ENCODE measurements at regions of chr1 and their contacts with region 1.

Region 1: DNA sequence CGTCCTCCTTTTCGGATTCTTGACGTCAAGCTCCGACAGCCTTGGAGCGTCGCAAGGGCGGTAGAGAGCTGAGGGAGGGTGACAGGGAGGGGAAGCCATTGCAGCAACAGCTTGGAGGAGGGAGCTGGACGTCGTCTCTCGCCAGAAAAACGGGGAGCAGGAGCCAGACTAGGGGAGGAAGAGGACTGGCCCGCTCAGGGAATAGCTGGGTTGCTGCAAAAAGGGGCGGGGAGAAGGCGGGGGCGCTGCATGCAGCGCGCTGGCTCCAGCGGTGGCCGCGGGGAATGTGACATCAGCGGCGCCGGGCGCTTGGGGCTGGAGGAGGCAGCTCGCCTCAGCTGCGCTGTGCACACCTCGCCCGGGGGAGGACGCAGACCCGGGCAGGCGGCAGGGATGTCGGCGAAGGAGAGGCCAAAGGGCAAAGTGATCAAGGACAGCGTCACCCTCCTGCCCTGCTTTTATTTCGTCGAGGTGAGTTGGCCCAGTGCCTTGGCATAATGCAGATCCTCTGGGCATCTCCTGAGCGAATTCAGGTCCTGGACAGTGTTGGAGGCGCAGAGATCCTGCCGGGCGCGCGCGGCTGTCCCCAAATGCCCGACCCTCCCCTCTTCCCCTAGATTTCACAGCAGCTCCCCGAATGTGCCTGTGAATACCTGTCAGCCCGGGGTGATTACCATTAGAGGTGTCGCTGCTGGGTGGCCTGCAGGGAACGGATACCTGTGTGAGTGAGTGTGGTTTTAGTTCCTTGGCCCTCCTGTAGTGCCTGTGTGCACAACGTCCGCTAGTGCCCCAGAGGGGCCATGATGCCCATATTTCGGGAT is at the start of gene PLPPR4:
- DNase-seq: peak; percentile 12
- ATAC-seq: peak; percentile 98
- H3K4me3 ChIP-seq: peak within 1 kb of the TSS; percentile 33 to 53
- H3K27ac ChIP-seq: no peak within 1 kb of the TSS
- H3K4me1 ChIP-seq: peaks cover 0 to 11% of the 10 kb centered on the region in 2 experiments; a peak in 2 of 4 replicates
- H3K27me3 ChIP-seq: no peaks in the 10 kb centered on the region
- CTCF ChIP-seq: no peak
- POLR2A ChIP-seq: no peak
- RAD21 ChIP-seq: no peak
- total RNA-seq, gene PLPPR4: 0.42 TPM

Region 2: DNA sequence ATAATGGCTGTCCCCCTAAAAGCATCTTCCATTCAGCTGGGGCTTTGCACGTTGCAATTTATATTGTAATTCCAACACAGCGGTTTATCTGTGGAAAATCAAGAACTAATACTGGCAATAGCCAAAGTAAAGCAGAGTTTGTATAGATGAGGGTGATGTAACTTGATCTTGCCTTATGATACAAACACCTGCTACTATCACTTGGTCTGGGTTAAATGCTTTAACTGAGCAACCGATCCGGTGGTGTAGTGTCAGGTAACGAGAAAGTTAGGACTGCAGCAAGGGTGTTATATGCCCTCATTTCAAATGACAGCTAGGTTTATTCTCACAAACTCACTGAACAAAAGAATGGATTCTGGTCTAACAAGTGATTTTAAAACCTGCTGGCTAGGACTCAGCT is 47.5 kb before region 1 on chr1:
- CTCF ChIA-PET with region 1: no interaction called
- POLR2A ChIA-PET with region 1: no interaction called
- RAD21 ChIA-PET with region 1: no interaction called
- intact Hi-C with region 1: loop called (anchors 1 kb)
- DNase-seq: no peak
- ATAC-seq: no peak
- H3K4me3 ChIP-seq: no peak overlapping the region
- H3K27ac ChIP-seq: no peak overlapping the region
- H3K4me1 ChIP-seq: no peaks in the 10 kb centered on the region
- H3K27me3 ChIP-seq: no peaks in the 10 kb centered on the region
- CTCF ChIP-seq: no peak
- POLR2A ChIP-seq: no peak
- RAD21 ChIP-seq: no peak

Region 3: DNA sequence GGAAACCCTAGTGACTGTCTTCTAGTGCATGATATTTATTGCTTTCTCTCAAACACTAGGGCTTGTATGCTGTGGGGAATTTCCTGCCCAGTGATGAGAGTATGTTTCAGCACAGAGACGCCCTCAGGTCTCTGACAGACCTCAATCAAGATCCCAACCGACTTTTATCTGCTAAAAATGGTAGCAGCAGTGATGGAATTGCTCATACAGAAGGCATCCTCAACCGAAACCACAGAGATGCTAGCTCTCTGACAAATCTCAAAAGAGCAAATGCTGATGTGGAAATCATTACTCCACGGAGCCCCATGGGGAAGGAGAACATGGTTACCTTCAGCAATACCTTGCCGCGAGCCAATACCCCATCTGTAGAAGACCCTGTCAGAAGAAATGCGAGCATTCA is 41.2 kb after region 1 on chr1:
- CTCF ChIA-PET with region 1: no interaction called
- POLR2A ChIA-PET with region 1: no interaction called
- RAD21 ChIA-PET with region 1: no interaction called
- intact Hi-C with region 1: no loop called
- DNase-seq: no peak
- ATAC-seq: no peak
- H3K4me3 ChIP-seq: no peak overlapping the region
- H3K27ac ChIP-seq: no peak overlapping the region
- H3K4me1 ChIP-seq: no peaks in the 10 kb centered on the region
- H3K27me3 ChIP-seq: no peaks in the 10 kb centered on the region
- CTCF ChIP-seq: no peak
- POLR2A ChIP-seq: no peak
- RAD21 ChIP-seq: no peak

Region 4: GRCh38 chr1:99992760-99993467 is 728.5 kb after region 1 on chr1:
- CTCF ChIA-PET with region 1: no interaction called
- POLR2A ChIA-PET with region 1: no interaction called
- RAD21 ChIA-PET with region 1: no interaction called
- intact Hi-C with region 1: no loop called
- DNase-seq: no peak
- ATAC-seq: peak; percentile 61
- H3K4me3 ChIP-seq: no peak overlapping the region
- H3K27ac ChIP-seq: no peak overlapping the region
- H3K4me1 ChIP-seq: peaks cover 0 to 7% of the 10 kb centered on the region in 2 experiments; a peak in 2 of 4 replicates
- H3K27me3 ChIP-seq: no peaks in the 10 kb centered on the region
- CTCF ChIP-seq: no peak
- POLR2A ChIP-seq: no peak
- RAD21 ChIP-seq: no peak

Region 5: DNA sequence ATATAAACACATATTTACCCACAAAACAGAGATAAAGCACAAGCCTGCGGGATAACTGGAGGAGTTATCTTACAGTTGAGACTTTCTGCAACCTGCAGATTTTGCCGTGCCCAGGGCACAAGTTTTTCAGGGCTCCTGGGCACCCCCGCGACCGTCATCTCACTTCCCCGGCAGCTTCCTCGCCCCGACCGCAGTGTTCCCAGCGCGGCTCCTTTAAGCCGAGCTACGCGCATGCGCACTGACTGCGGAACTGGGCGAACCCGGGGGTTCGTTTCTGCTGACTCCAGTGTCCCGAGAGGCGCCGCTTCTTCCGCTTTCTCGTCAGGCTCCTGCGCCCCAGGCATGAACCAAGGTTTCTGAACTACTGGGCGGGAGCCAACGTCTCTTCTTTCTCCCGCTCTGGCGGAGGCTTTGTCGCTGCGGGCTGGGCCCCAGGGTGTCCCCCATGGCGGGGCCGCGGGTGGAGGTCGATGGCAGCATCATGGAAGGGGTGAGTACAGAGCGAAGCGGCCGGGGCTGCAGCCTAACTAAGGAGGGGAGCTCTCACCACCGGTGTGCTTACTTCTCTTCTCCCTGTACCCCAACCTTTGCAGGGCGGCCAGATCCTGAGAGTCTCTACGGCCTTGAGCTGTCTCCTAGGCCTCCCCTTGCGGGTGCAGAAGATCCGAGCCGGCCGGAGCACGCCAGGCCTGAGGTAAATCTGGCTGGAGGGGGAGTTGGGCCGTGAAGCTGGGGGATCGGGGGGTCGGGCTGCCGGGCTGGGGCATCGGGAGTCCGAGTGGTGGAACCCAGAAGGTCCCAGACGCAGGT is 1001.7 kb after region 1 on chr1 and contains the start of gene RTCA:
- CTCF ChIA-PET with region 1: no interaction called
- POLR2A ChIA-PET with region 1: no interaction called
- RAD21 ChIA-PET with region 1: no interaction called
- intact Hi-C with region 1: no loop called
- DNase-seq: peak; percentile 87
- ATAC-seq: peak; percentile 96
- H3K4me3 ChIP-seq: peak within 1 kb of the TSS; percentile 94 to 99
- H3K27ac ChIP-seq: peak within 1 kb of the TSS; percentile 87
- H3K4me1 ChIP-seq: peaks cover 0 to 15% of the 10 kb centered on the region in 2 experiments; a peak in 2 of 4 replicates
- H3K27me3 ChIP-seq: no peaks in the 10 kb centered on the region
- CTCF ChIP-seq: no peak
- POLR2A ChIP-seq: peak; percentile 86
- RAD21 ChIP-seq: no peak
- total RNA-seq, gene RTCA: 26.5 TPM